ENCODE measurements at regions of chr4 and their contacts with region 1.

Region 1: DNA sequence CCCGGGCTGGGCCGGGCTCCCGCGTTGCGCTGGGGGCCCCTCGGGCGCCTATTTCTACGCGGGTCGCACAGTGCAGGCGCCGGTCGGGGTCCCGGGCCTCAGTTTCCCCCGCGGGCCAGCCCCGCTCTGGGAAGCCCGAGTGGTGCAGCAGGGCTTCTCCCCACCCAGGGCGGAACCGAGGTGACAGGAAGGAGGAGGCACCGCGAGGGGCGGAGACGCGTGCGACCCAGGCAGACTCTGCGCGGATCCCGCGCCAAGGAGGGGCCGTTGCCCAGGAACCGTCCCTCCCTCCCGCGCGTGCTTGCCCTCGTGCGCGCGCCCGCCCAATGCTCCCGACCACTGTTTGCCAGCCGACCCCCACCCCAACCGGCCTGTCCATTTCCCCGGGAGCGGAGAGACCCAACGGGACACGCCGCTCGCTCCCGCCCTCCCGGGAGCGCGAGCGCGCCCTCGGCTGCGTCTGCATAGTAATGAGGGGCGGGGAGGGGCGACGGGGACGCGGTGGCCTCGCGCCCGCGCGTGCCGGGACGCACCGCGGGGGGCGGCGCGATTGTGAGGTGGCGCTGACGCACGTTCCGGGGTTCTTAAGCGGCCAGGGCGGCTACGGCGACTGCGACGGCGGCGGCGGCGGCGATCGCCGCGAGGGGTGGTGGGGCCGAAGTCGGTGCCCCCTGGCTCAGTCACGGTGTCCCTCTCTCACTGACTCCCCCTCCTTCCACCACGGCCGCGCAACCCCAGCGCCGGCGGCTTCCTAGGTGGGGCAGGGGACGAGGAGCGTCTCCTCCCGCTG is at the start of gene CPEB2:
- DNase-seq: peak; percentile 85
- H3K4me3 ChIP-seq: peak within 1 kb of the TSS; percentile 99
- H3K27me3 ChIP-seq: no peaks in the 10 kb centered on the region
- CTCF ChIP-seq: no peak
- polyA plus RNA-seq, gene CPEB2: 2.8 and 6.7 TPM in 2 replicates

Region 2: DNA sequence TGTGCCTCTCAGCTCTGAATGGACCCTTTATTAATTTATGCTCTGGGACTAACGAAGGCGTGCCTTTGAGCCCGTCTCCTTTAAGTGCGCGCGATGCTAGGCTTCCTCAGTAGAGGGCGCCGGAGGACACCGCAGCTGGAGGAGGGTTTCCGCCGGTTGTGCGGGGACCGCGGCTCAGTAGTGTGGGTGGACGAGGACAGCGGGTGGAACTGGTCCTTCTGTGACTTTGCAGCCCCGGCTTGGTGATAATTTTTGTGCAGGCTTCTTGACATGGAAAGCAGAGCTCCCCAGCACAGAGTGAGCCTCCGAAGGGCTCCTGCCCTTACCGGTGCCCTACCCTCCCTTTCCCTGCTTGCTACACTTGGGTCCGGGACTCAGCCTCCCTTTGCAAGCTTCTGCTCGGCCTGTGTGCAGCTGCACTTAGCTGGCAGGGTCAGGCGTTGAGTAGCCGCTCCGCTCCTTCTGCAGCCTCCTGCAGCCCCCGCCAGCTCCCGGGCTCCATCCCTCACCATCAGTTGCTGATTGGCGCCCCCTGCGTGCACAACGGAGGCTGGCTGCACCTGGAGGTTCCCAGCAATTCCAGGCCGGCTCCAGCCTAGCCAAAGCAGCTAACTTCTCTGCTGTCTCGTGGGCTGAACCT is 1347.8 kb before region 1 on chr4:
- CTCF ChIA-PET with region 1: interaction called, 13 read pairs
- POLR2A ChIA-PET with region 1: no interaction called
- DNase-seq: no peak
- H3K4me3 ChIP-seq: peak overlapping the region; percentile 52
- H3K27me3 ChIP-seq: no peaks in the 10 kb centered on the region
- CTCF ChIP-seq: peak; percentile 95

Region 3: DNA sequence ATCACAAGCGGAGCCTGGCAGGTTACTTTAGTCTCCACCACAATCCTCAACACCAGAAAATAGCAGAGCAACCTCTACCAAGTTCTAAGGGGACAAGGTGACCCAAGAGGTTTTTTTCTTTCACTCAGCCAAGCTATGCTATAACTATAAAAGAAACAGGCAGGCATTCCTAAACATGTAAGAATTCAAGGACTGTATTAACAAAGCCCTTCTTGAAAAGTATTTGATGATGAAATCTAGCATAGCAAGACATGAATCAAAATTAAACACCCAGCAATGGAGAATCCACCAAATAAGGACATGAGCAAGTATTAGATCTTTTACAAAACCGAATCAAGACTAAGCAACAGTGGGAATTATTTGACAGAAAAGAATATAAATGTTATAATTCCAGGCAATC is 400.1 kb after region 1 on chr4:
- CTCF ChIA-PET with region 1: no interaction called
- POLR2A ChIA-PET with region 1: interaction called, 15 read pairs
- DNase-seq: no peak
- H3K4me3 ChIP-seq: no peak overlapping the region
- H3K27me3 ChIP-seq: no peaks in the 10 kb centered on the region
- CTCF ChIP-seq: no peak

Measured in BJ (cell line).